ENCODE measurements at regions of chr4 and their contacts with region 1.

Region 1: GRCh38 chr4:152112887-152113286 is 352.1 kb upstream of the GATB start:
- DNase-seq: no peak
- ATAC-seq: no peak
- H3K4me3 ChIP-seq: no peak overlapping the region
- H3K27ac ChIP-seq: peak overlapping the region in 1 of 10 donors; percentile 12
- H3K4me1 ChIP-seq: peaks cover 7 to 68% (median 43%) of the 10 kb centered on the region in 9 donors
- H3K27me3 ChIP-seq: no peaks in the 10 kb centered on the region
- CTCF ChIP-seq: no peak

Region 2: GRCh38 chr4:151403656-151404055 is 709.2 kb before region 1 on chr4:
- intact Hi-C with region 1: loop called in 1 of 10 experiments (anchors 5 kb)
- DNase-seq: no peak
- ATAC-seq: no peak
- H3K4me3 ChIP-seq: no peak overlapping the region
- H3K27ac ChIP-seq: no peak overlapping the region
- H3K4me1 ChIP-seq: peaks cover 0 to 17% (median 7%) of the 10 kb centered on the region in 9 donors
- H3K27me3 ChIP-seq: peaks cover 0 to 9% (median 0%) of the 10 kb centered on the region in 7 donors
- CTCF ChIP-seq: no peak

Region 3: DNA sequence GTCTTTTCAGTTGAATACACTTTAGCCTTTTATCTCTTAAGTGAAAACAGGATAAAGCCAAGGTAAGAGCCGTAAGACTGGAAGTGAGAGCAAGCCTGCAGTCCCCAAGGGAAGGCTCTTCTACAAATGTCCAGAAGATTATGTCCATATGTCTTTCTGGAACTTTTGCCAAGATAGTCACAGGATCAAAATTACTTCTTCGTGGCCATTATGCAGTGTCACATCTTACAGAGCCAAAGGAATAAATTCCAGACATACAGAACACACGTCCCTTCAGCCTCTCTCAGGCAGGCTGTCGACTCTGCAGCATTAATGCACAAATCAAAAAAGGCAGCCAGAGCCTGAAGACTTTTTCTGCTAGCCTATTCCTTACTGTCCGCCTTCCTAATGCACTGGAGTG is 341.2 kb before region 1 on chr4:
- intact Hi-C with region 1: no loop called
- DNase-seq: no peak
- ATAC-seq: no peak
- H3K4me3 ChIP-seq: no peak overlapping the region
- H3K27ac ChIP-seq: no peak overlapping the region
- H3K4me1 ChIP-seq: no peaks in the 10 kb centered on the region
- H3K27me3 ChIP-seq: peaks cover 0 to 12% (median 0%) of the 10 kb centered on the region in 7 donors
- CTCF ChIP-seq: no peak

Region 4: GRCh38 chr4:152032722-152033131 is 80.2 kb before region 1 on chr4:
- intact Hi-C with region 1: no loop called
- DNase-seq: no peak
- ATAC-seq: peak in 6 of 8 donors; percentile 48 to 91 (median 54)
- H3K4me3 ChIP-seq: no peak overlapping the region
- H3K27ac ChIP-seq: peak overlapping the region in 9 of 10 donors; percentile 34 to 74 (median 55)
- H3K4me1 ChIP-seq: peaks cover 0 to 18% (median 4%) of the 10 kb centered on the region in 9 donors
- H3K27me3 ChIP-seq: no peaks in the 10 kb centered on the region
- CTCF ChIP-seq: no peak

Region 5: DNA sequence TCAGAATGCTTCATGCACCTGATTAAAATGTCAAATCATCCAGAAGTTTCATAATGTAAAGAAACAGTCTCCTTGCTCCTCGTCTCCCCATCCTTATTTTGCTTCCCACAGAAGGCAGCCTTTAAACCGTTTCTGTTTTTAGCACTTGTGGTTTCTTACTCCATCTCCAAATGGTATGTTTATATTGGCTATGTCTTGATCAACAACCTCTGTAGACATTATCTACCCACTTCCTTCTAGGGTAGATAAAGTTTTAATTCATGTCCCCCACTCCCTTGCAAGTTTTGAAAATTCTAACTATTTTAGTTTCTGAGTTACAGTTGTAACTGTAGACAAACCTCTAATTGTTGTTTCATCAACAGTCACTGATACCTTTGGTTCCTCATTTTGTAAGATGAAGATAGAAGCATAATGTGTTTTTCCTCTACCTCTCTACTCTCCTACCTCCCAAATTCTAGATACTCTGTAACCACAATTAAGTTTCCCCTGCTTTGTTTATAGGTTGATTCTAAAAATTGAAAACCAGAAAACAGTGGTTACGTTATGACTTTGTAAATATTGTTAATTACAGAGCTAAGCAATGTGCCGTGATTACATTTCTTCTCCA is 60.3 kb before region 1 on chr4:
- intact Hi-C with region 1: no loop called
- DNase-seq: no peak
- ATAC-seq: no peak
- H3K4me3 ChIP-seq: no peak overlapping the region
- H3K27ac ChIP-seq: no peak overlapping the region
- H3K4me1 ChIP-seq: no peaks in the 10 kb centered on the region
- H3K27me3 ChIP-seq: no peaks in the 10 kb centered on the region
- CTCF ChIP-seq: no peak

Region 6: DNA sequence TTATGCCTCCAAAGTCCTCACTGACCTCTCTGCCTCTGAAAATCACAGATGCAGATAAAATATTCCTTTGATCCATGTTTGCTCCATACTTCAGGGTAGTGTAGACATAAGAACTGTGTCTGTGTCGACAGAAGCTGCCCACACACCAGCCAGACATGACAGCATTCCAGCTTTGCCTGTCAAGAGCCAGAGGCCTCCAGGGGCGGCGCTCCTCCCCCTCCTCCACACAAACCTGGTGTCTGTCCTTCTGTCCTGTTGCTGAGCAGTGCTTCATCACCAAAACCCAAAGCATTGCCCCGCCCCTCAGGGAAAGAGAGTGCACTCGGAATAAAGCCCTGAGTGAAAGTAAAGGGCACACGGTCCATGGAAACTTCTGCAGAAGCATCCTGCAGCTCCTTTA is 43.6 kb after region 1 on chr4:
- intact Hi-C with region 1: loop called in 1 of 10 experiments (anchors 5 kb)
- DNase-seq: peak; percentile 48 to 56
- ATAC-seq: peak; percentile 59 to 89 (median 76)
- H3K4me3 ChIP-seq: no peak overlapping the region
- H3K27ac ChIP-seq: peak overlapping the region in 1 of 10 donors; percentile 23
- H3K4me1 ChIP-seq: peaks cover 0 to 17% (median 5%) of the 10 kb centered on the region in 9 donors
- H3K27me3 ChIP-seq: no peaks in the 10 kb centered on the region
- CTCF ChIP-seq: no peak

Measured in heart right ventricle (tissue), 16 donors.